Prostate gland (tissue), 2 donors: ENCODE measurements at regions of chr7 and their contacts with region 1.

Region 1: DNA sequence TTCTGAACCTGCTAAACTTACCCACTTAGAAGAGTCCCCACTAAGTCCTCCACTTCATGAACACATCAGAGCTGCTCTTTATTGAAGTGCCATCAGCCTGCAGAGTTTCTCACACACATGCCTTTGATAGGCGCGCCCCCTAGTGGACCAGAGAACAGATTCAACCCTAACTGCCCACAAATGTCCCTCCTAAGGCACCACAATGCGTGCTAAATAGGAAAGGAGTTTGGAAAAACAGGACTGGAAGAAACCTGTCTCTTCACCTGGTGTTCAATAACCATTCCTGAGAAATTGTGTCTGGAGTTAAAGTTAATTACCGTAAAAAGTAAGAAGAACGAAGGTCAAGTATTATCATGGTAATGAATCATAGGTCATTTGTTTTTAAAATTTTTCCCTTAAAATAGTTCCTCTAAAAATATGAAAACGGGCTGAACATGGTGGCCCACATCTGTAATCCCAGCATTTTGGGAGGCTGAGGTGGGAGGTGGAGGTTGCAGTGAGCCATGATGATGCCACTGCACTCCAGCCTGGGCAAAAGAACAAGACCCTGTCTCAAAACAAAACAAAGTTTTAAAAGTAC is 249.7 kb downstream of the ELMO1 start:
- DNase-seq: peak; percentile 78
- H3K4me3 ChIP-seq: no peak overlapping the region
- H3K27ac ChIP-seq: no peak overlapping the region
- H3K4me1 ChIP-seq: no peaks in the 10 kb centered on the region
- H3K27me3 ChIP-seq: no peaks in the 10 kb centered on the region
- CTCF ChIP-seq: peak; percentile 74 to 81 (median 77)
- POLR2A ChIP-seq: no peak

Region 2: GRCh38 chr7:36487756-36488336 is 711.1 kb before region 1 on chr7:
- intact Hi-C with region 1: loop called (anchors 5 kb)
- DNase-seq: peak; percentile 33
- H3K4me3 ChIP-seq: no peak overlapping the region
- H3K27ac ChIP-seq: no peak overlapping the region
- H3K4me1 ChIP-seq: no peaks in the 10 kb centered on the region
- H3K27me3 ChIP-seq: no peaks in the 10 kb centered on the region
- CTCF ChIP-seq: peak; percentile 14 to 85 (median 70)
- POLR2A ChIP-seq: no peak

Region 3: GRCh38 chr7:36670585-36671431 is 528.2 kb before region 1 on chr7:
- intact Hi-C with region 1: loop called (anchors 10 kb)
- DNase-seq: peak; percentile 42
- H3K4me3 ChIP-seq: no peak overlapping the region
- H3K27ac ChIP-seq: no peak overlapping the region
- H3K4me1 ChIP-seq: no peaks in the 10 kb centered on the region
- H3K27me3 ChIP-seq: no peaks in the 10 kb centered on the region
- CTCF ChIP-seq: peak; percentile 63 to 75 (median 68)
- POLR2A ChIP-seq: no peak

Region 4: GRCh38 chr7:36951257-36951697 is 247.7 kb before region 1 on chr7:
- intact Hi-C with region 1: no loop called
- DNase-seq: no peak
- H3K4me3 ChIP-seq: no peak overlapping the region
- H3K27ac ChIP-seq: no peak overlapping the region
- H3K4me1 ChIP-seq: peaks cover 6% of the 10 kb centered on the region
- H3K27me3 ChIP-seq: no peaks in the 10 kb centered on the region
- CTCF ChIP-seq: no peak
- POLR2A ChIP-seq: no peak

Region 5: GRCh38 chr7:36967387-36967786 is 231.6 kb before region 1 on chr7:
- intact Hi-C with region 1: loop called (anchors 5 kb)
- DNase-seq: no peak
- H3K4me3 ChIP-seq: no peak overlapping the region
- H3K27ac ChIP-seq: no peak overlapping the region
- H3K4me1 ChIP-seq: no peaks in the 10 kb centered on the region
- H3K27me3 ChIP-seq: no peaks in the 10 kb centered on the region
- CTCF ChIP-seq: peak in 3 of 4 experiments; percentile 57 to 66 (median 61)
- POLR2A ChIP-seq: no peak

Region 6: DNA sequence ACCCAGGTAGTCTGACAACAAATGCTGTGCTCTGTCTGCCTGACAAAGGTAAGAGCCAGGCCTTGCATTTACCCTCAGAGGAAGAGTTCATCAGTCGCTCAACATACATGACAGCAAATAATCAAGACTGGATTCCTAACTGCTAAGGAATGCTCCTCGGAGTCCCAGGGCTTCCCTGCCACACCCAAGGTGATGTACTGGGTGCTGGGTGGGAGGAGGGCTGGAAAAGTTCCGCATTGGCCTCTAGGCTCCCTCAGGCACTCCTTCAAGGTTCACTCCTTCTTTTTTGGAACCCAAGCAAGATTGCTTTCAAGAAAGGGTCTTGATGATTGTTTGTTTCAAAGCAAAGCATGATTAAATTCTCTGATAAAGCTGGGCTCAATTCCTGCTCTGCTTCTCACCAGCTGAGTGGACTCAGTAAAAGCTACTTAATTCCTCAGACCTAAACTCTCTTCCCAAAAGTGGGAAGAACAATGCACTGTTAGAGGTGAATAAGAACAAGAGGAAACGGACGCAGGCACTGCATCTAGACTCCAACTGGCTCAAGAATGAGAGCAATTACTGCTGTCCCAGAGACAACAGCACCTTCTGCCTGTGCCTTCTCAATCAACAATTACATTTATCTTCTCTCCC is 76.2 kb after region 1 on chr7:
- intact Hi-C with region 1: no loop called
- DNase-seq: no peak
- H3K4me3 ChIP-seq: no peak overlapping the region
- H3K27ac ChIP-seq: no peak overlapping the region
- H3K4me1 ChIP-seq: no peaks in the 10 kb centered on the region
- H3K27me3 ChIP-seq: no peaks in the 10 kb centered on the region
- CTCF ChIP-seq: no peak
- POLR2A ChIP-seq: no peak

Region 7: GRCh38 chr7:37342688-37343471 is 143.9 kb after region 1 on chr7:
- intact Hi-C with region 1: no loop called
- DNase-seq: no peak
- H3K4me3 ChIP-seq: no peak overlapping the region
- H3K27ac ChIP-seq: no peak overlapping the region
- H3K4me1 ChIP-seq: no peaks in the 10 kb centered on the region
- H3K27me3 ChIP-seq: no peaks in the 10 kb centered on the region
- CTCF ChIP-seq: no peak
- POLR2A ChIP-seq: no peak

Region 8: GRCh38 chr7:38478404-38478803 is 1279.4 kb after region 1 on chr7:
- intact Hi-C with region 1: no loop called
- DNase-seq: no peak
- H3K4me3 ChIP-seq: no peak overlapping the region
- H3K27ac ChIP-seq: no peak overlapping the region
- H3K4me1 ChIP-seq: no peaks in the 10 kb centered on the region
- H3K27me3 ChIP-seq: no peaks in the 10 kb centered on the region
- CTCF ChIP-seq: no peak
- POLR2A ChIP-seq: no peak